PC-9 (cell line): ENCODE measurements at regions of chr17 and their contacts with region 1.

Region 1: GRCh38 chr17:17641621-17642409 is 39.4 kb upstream of the RAI1 start:
- DNase-seq: peak; percentile 63 to 78
- H3K4me3 ChIP-seq: no peak overlapping the region
- H3K27ac ChIP-seq: no peak overlapping the region
- H3K4me1 ChIP-seq: no peaks in the 10 kb centered on the region; the same call in 1 of the 2 replicates
- H3K27me3 ChIP-seq: 0 out of 2 replicates have a peak, but pooled peaks cover 2% of the 10 kb centered on the region
- CTCF ChIP-seq: peak; percentile 96

Region 2: DNA sequence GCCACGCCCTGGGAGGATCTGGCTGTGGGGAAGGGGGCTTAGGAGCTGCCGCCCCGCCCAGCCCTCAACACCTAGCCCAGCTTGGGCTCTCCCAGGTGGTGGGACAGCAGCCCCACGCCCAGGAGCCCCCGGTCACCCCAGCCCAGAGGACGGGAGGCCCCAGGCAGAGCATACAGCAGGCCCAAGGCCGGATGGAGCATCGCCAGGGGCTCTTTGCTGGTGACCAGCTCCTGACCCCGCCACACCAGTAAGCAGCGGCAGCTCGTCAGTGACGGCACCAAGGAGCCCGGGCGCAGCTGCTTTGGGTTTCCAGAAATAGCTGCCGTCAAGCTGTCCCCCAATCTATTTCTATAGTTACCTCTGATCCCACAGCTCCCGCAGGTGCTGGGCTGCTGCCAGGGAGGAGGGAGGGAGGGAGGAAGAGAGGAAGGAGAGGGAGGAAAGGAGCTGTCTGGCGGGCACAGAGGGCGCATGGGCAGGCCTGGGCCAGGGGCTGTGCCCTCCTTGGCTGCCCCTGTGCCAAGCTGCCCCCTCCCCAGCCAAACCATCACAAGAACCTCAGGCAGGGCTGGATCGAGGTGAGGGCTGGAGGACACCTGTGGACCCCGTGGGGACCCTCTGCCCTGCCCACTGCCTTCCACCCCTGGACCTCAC is 134.9 kb before region 1 on chr17:
- CTCF ChIA-PET with region 1: interaction called, 16 read pairs
- POLR2A ChIA-PET with region 1: no interaction called
- intact Hi-C with region 1: no loop called
- DNase-seq: no peak
- H3K4me3 ChIP-seq: no peak overlapping the region
- H3K27ac ChIP-seq: no peak overlapping the region
- H3K4me1 ChIP-seq: peaks cover 17% of the 10 kb centered on the region
- H3K27me3 ChIP-seq: no peaks in the 10 kb centered on the region
- CTCF ChIP-seq: no peak

Region 3: DNA sequence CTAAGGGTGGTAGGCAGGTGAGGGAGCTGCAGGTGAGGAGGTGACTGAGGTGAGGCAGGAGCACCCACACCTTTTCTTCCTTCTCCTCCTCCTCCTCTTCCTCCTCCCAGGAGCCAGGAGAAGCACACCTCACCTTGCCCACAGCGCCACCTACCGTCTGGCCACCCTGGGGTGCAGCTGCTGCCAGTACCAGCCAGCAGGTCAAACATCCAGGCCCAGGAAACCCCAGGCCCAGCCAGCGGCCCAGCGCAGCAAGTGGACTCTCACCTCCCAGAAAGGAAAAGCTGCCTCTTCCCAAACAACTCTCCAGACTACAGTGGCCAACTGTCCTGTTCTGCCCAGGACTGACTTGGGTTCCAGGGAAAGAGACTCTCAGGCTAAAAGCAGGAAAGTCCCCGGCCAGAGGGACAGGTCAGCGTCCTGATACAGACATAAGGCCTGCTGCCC is 73.0 kb before region 1 on chr17:
- CTCF ChIA-PET with region 1: interaction called, 3 read pairs
- POLR2A ChIA-PET with region 1: no interaction called
- intact Hi-C with region 1: loop called (anchors 1 kb)
- DNase-seq: peak; percentile 49 to 81
- H3K4me3 ChIP-seq: no peak overlapping the region
- H3K27ac ChIP-seq: no peak overlapping the region
- H3K4me1 ChIP-seq: no peaks in the 10 kb centered on the region
- H3K27me3 ChIP-seq: no peaks in the 10 kb centered on the region
- CTCF ChIP-seq: peak; percentile 93

Region 4: GRCh38 chr17:17653343-17653742 is 11.5 kb after region 1 on chr17:
- CTCF ChIA-PET with region 1: no interaction called
- POLR2A ChIA-PET with region 1: no interaction called
- intact Hi-C with region 1: no loop called
- DNase-seq: no peak
- H3K4me3 ChIP-seq: no peak overlapping the region
- H3K27ac ChIP-seq: no peak overlapping the region
- H3K4me1 ChIP-seq: no peaks in the 10 kb centered on the region
- H3K27me3 ChIP-seq: 0 out of 2 replicates have a peak, but pooled peaks cover under 1% of the 10 kb centered on the region
- CTCF ChIP-seq: no peak